Heart left ventricle (tissue), 16 donors: ENCODE measurements at regions of chr17 and their contacts with region 1.

Region 1: DNA sequence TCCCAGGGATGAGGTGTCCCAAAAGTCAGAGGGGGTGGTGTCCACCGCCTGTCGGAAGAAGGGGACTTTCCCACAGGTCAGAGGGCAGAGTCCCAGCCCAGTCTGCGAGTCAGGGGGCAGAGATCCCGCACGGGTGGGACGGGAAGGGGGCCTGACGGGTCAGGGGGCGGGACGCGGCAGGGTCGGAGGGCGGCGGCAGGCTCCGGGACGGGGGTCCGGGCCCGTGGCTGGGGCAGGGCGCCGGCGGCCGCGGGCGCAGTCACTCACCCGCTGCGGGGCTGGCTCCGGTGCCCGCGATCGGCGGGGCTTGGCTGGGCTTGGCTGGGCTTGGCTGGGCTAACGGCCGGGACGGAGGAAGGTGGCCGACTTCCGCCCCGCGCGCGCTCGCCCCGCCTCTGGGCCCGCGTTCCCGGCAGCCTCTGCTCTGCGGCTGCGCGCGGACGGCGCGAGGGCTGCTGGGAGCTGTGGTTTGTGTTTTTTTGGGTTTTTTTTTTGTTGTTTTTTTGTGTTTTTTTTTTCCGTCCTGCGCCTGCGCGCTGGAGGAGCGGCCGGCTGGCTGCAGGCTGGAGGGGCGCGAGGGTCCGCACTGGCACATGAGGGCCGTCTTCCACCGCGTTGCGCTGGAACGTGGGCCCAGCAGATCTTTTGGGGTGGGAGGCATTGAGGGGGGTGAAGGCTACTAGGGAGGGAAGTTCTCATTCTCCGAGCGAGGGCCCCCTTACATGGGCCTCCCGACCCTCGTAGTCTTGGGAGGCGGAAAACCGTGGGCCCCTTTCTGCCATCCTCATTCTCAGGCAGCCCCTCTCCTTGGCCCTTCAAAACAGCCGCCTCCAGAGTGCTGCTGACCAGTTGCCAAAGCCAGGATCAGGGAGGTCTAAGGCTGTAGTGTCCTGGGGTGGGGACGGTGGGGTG is at the start of gene CANT1:
- DNase-seq: peak; percentile 86 to 93 (median 88)
- ATAC-seq: peak; percentile 81 to 97 (median 96)
- H3K4me3 ChIP-seq: peak within 1 kb of the TSS; percentile 57 to 100 (median 83)
- H3K27ac ChIP-seq: peak within 1 kb of the TSS; percentile 68 to 94 (median 88)
- H3K4me1 ChIP-seq: peaks cover 7 to 48% (median 33%) of the 10 kb centered on the region in 12 donors
- H3K27me3 ChIP-seq: no peaks in the 10 kb centered on the region
- CTCF ChIP-seq: no peak
- POLR2A ChIP-seq: peak in 1 of 2 donors; percentile 60
- total RNA-seq, gene CANT1: 20.4 to 43.7 (median 24.1) TPM

Region 2: GRCh38 chr17:79073501-79074088 is 63.9 kb after region 1 on chr17:
- intact Hi-C with region 1: no loop called
- DNase-seq: no peak
- ATAC-seq: no peak
- H3K4me3 ChIP-seq: no peak overlapping the region
- H3K27ac ChIP-seq: peak overlapping the region in 1 of 12 donors; percentile 87
- H3K4me1 ChIP-seq: peaks cover 0 to 25% (median 14%) of the 10 kb centered on the region in 12 donors
- H3K27me3 ChIP-seq: no peaks in the 10 kb centered on the region
- CTCF ChIP-seq: no peak
- POLR2A ChIP-seq: no peak

Region 3: DNA sequence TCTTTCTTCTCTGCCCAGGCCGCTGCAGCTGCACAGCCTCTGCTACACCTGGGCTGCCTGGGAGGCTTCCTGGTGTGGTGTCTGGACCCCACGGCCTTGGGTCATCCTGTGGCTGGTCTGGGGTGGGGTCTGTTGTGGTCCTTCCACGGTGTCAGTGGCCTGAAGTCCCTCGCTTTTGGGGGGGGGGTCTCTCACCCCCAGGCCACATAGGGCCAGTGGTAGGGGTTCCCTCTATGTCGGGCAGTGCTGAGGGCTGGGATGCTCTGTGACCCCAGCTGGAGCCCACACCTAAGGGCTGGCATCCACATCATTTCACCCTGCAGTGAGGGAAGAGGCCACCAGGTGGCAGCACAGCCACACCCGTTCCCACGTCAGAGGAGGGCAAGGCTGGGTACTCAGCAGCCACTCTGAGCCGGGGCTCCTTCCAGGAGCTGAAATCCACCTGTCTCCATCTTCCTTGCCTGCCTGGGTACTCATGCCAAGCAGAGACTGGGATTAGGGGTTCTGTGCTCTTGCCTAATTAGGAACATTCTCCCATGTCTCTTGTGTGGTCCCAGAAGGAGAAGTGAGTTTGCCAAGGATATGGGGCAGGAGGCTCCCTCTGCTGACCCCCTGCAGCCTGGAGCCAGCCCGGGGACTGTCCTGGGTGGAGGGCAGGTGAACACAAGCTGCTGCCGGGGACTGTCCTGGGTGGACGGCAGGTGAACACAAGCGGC is 77.9 kb after region 1 on chr17:
- intact Hi-C with region 1: loop called in 1 of 10 experiments (anchors 10 kb)
- DNase-seq: peak; percentile 56 to 83 (median 64)
- ATAC-seq: peak; percentile 49 to 73 (median 64)
- H3K4me3 ChIP-seq: no peak overlapping the region
- H3K27ac ChIP-seq: no peak overlapping the region
- H3K4me1 ChIP-seq: peaks cover 0 to 18% (median 5%) of the 10 kb centered on the region in 12 donors
- H3K27me3 ChIP-seq: peaks cover 0 to 18% (median 0%) of the 10 kb centered on the region in 9 donors
- CTCF ChIP-seq: peak; percentile 77 to 97 (median 92)
- POLR2A ChIP-seq: no peak

Region 4: GRCh38 chr17:79294459-79295071 is 284.9 kb after region 1 on chr17:
- intact Hi-C with region 1: no loop called
- DNase-seq: peak; percentile 54 to 77 (median 61)
- ATAC-seq: peak in 3 of 4 donors; percentile 46 to 66 (median 51)
- H3K4me3 ChIP-seq: no peak overlapping the region
- H3K27ac ChIP-seq: no peak overlapping the region
- H3K4me1 ChIP-seq: no peaks in the 10 kb centered on the region
- H3K27me3 ChIP-seq: peaks cover 0 to 46% (median 5%) of the 10 kb centered on the region in 9 donors
- CTCF ChIP-seq: no peak
- POLR2A ChIP-seq: no peak